ENCODE measurements at regions of chrX and their contacts with region 1.

Region 1: GRCh38 chrX:16023790-16024734 is 99.3 kb upstream of the GRPR start:
- DNase-seq: peak in 1 of 9 experiments; percentile 1
- ATAC-seq: no peak
- H3K4me3 ChIP-seq: no peak overlapping the region
- H3K4me3 Mint-ChIP-seq: no peak overlapping the region
- H3K27ac ChIP-seq: no peak overlapping the region
- H3K27ac Mint-ChIP-seq: no peak overlapping the region
- H3K4me1 ChIP-seq: no peaks in the 10 kb centered on the region
- H3K4me1 Mint-ChIP-seq: no peaks in the 10 kb centered on the region
- H3K27me3 ChIP-seq: no peaks in the 10 kb centered on the region
- H3K27me3 Mint-ChIP-seq: peaks cover 8% of the 10 kb centered on the region
- CTCF ChIP-seq: no peak

Region 2: DNA sequence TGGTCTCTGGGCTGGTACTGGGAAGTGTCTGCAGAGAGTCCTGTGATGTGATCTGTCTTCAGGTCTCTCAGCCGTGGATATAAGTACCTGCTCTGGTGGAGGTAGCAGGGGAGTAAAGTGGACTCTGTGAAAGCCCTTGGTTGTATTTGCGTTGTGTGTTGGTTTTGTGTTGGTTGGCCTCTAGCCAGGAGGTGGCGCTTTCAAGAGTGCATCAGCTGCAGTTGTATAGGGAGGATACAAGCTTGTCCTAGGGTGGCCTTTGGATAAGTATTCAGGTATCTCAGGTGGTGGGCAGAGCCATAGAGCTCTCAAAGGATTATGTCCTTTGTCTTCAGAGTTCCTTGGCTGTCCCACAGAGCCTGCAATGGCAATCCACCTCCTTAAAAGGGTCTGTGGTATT is 254.9 kb after region 1 on chrX:
- CTCF ChIA-PET with region 1: no interaction called
- POLR2A ChIA-PET with region 1: no interaction called
- intact Hi-C with region 1: loop called in 1 of 2 experiments (anchors 5 kb)
- DNase-seq: peak in 1 of 9 experiments; percentile 1
- ATAC-seq: no peak
- H3K4me3 ChIP-seq: no peak overlapping the region
- H3K4me3 Mint-ChIP-seq: no peak overlapping the region
- H3K27ac ChIP-seq: no peak overlapping the region
- H3K27ac Mint-ChIP-seq: no peak overlapping the region
- H3K4me1 ChIP-seq: no peaks in the 10 kb centered on the region
- H3K4me1 Mint-ChIP-seq: no peaks in the 10 kb centered on the region
- H3K27me3 ChIP-seq: no peaks in the 10 kb centered on the region
- H3K27me3 Mint-ChIP-seq: peaks cover 10% of the 10 kb centered on the region
- CTCF ChIP-seq: no peak

Measured in CD8-positive, alpha-beta T cell (primary cell).